ENCODE measurements at regions of chr7 and their contacts with region 1.

Region 1: GRCh38 chr7:150876817-150877526 is 24.7 kb downstream of the AOC1 start:
- DNase-seq: peak; percentile 66
- H3K4me3 Mint-ChIP-seq: no peak overlapping the region
- H3K27ac Mint-ChIP-seq: no peak overlapping the region
- H3K4me1 Mint-ChIP-seq: peaks cover 11% of the 10 kb centered on the region
- H3K27me3 Mint-ChIP-seq: no peaks in the 10 kb centered on the region

Region 2: GRCh38 chr7:150734254-150734653 is 142.7 kb before region 1 on chr7:
- CTCF ChIA-PET with region 1: no interaction called
- POLR2A ChIA-PET with region 1: no interaction called
- intact Hi-C with region 1: no loop called
- DNase-seq: peak; percentile 84
- H3K4me3 Mint-ChIP-seq: peak overlapping the region; percentile 38
- H3K27ac Mint-ChIP-seq: peak overlapping the region; percentile 97
- H3K4me1 Mint-ChIP-seq: peaks cover 71% of the 10 kb centered on the region
- H3K27me3 Mint-ChIP-seq: no peaks in the 10 kb centered on the region

Region 3: DNA sequence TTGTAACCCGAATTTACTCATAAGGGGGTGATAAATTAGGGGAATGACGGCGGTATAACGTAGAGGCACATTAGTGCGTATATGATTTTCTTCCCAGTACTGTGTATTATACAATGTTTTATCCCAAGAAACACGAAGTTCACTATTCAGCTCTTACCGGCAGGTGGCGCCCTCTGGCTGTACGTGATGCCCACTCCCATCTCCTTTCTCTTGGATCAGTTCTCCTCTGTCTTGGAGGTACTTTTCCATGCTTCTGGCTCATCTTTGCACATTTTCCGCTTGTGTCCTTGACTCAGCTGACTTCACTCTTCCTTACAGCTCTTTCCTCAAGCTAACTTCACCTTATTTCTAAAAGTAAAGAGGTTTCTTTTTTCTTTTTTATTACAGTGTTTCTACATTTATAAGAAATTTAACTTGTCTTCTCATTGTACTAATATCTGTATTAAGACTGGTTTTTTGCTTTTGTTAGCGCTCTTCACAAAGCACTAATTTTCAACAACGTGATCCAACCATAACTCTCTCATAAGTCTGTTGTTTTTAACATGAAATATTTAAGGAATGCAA is 98.2 kb before region 1 on chr7:
- CTCF ChIA-PET with region 1: interaction called, 18 read pairs
- POLR2A ChIA-PET with region 1: no interaction called
- intact Hi-C with region 1: loop called (anchors 10 kb)
- DNase-seq: peak; percentile 81
- H3K4me3 Mint-ChIP-seq: no peak overlapping the region
- H3K27ac Mint-ChIP-seq: no peak overlapping the region
- H3K4me1 Mint-ChIP-seq: peaks cover 4% of the 10 kb centered on the region
- H3K27me3 Mint-ChIP-seq: peaks cover 1% of the 10 kb centered on the region

Region 4: GRCh38 chr7:150846291-150847115 is 30.5 kb before region 1 on chr7:
- CTCF ChIA-PET with region 1: no interaction called
- POLR2A ChIA-PET with region 1: no interaction called
- intact Hi-C with region 1: no loop called
- DNase-seq: no peak
- H3K4me3 Mint-ChIP-seq: no peak overlapping the region
- H3K27ac Mint-ChIP-seq: no peak overlapping the region
- H3K4me1 Mint-ChIP-seq: no peaks in the 10 kb centered on the region
- H3K27me3 Mint-ChIP-seq: peaks cover 6% of the 10 kb centered on the region

Region 5: GRCh38 chr7:150891740-150892139 is 14.8 kb after region 1 on chr7:
- CTCF ChIA-PET with region 1: interaction called, 58 read pairs
- POLR2A ChIA-PET with region 1: no interaction called
- intact Hi-C with region 1: no loop called
- DNase-seq: no peak
- H3K4me3 Mint-ChIP-seq: no peak overlapping the region
- H3K27ac Mint-ChIP-seq: no peak overlapping the region
- H3K4me1 Mint-ChIP-seq: no peaks in the 10 kb centered on the region
- H3K27me3 Mint-ChIP-seq: peaks cover 14% of the 10 kb centered on the region

Region 6: DNA sequence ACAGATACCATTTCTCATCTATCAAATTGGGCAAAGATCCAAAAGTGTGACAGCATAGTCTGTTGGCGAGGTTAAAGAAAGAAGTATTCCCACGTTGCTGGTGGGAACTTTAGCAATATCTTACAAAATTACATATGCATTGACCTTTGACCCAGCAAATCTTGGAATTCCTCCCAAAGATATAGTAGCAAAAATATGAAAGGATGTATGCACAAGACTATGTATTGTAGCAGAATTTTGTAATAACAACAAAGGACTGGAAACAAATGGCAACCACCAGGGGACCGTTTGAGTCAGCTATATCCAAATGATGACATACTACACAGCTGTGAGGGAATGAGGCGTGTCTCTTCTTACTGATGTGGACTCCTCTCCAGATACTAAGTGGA is 51.0 kb after region 1 on chr7:
- CTCF ChIA-PET with region 1: interaction called, 3 read pairs
- POLR2A ChIA-PET with region 1: no interaction called
- intact Hi-C with region 1: loop called (anchors 10 kb)
- DNase-seq: peak; percentile 32
- H3K4me3 Mint-ChIP-seq: no peak overlapping the region
- H3K27ac Mint-ChIP-seq: no peak overlapping the region
- H3K4me1 Mint-ChIP-seq: peaks cover 21% of the 10 kb centered on the region
- H3K27me3 Mint-ChIP-seq: no peaks in the 10 kb centered on the region